A549 (cell line): ENCODE measurements at regions of chr1 and their contacts with region 1.

Region 1: DNA sequence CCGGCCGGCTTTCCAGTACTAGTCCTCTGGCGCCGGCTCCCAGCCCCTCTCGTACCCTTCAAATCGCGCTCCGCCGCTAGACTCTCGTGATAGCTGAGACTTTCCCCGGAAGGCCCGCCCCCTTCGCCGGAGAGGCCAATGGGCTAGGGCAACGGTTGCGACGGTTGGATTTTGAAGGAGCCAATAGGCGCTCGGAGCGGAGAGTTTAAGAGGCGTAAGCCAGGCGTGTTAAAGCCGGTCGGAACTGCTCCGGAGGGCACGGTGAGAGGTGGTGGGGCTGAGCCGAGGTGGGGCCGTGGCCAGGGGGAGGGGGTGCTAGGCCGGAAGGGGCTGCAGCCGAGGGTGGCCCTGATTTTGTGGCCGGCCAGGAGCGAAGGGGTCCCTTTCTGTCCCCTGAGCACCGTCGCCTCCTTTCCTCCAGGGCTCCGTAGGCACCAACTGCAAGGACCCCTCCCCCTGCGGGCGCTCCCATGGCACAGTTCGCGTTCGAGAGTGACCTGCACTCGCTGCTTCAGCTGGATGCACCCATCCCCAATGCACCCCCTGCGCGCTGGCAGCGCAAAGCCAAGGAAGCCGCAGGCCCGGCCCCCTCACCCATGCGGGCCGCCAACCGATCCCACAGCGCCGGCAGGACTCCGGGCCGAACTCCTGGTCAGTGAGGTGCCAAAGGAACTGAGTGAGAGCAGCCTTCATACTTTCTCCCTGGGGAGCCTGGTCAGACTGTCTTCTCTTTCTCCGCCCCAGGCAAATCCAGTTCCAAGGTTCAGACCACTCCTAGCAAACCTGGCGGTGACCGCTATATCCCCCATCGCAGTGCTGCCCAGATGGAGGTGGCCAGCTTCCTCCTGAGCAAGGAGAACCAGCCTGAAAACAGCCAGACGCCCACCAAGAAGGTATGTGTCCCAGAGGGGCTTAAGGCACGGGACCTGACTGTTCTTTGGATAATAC is at the start of gene CDC20:
- DNase-seq: peak; percentile 68 to 95
- ATAC-seq: peak; percentile 91 to 96
- H3K4me3 ChIP-seq: peak within 1 kb of the TSS; percentile 62
- H3K27ac ChIP-seq: peak within 1 kb of the TSS; percentile 92 to 97
- H3K4me1 ChIP-seq: peaks cover 41% of the 10 kb centered on the region
- CTCF ChIP-seq: no peak
- EP300 ChIP-seq: no peak
- POLR2A ChIP-seq: peak; percentile 42; the same call in 1 of the 2 replicates
- RAD21 ChIP-seq: no peak
- polyA plus RNA-seq, gene CDC20: 73.8 and 91.5 TPM in 2 replicates

Region 2: GRCh38 chr1:43206600-43207228 is 152.3 kb before region 1 on chr1:
- CTCF ChIA-PET with region 1: no interaction called
- POLR2A ChIA-PET with region 1: interaction called, 10 read pairs
- DNase-seq: peak; percentile 66 to 95
- ATAC-seq: peak; percentile 96 to 99
- H3K4me3 ChIP-seq: peak overlapping the region; percentile 32
- H3K27ac ChIP-seq: peak overlapping the region; percentile 89 to 92
- H3K4me1 ChIP-seq: peaks cover 26% of the 10 kb centered on the region
- CTCF ChIP-seq: no peak
- EP300 ChIP-seq: peak; percentile 31 to 69; a peak in 2 of 5 replicates
- POLR2A ChIP-seq: peak; percentile 7; the same call in 1 of the 2 replicates
- RAD21 ChIP-seq: 0 out of 5 replicates have a peak, but pooled peaks of 1 of the 2 experiments have one; percentile 6

Region 3: GRCh38 chr1:43300378-43301094 is 58.5 kb before region 1 on chr1 and contains the start of gene TIE1:
- CTCF ChIA-PET with region 1: no interaction called
- POLR2A ChIA-PET with region 1: no interaction called
- DNase-seq: no peak
- ATAC-seq: no peak
- H3K4me3 ChIP-seq: no peak within 1 kb of the TSS
- H3K27ac ChIP-seq: no peak within 1 kb of the TSS
- H3K4me1 ChIP-seq: no peaks in the 10 kb centered on the region
- CTCF ChIP-seq: no peak
- EP300 ChIP-seq: no peak
- POLR2A ChIP-seq: no peak
- RAD21 ChIP-seq: no peak
- polyA plus RNA-seq, gene TIE1: not detected in 2 replicates

Region 4: DNA sequence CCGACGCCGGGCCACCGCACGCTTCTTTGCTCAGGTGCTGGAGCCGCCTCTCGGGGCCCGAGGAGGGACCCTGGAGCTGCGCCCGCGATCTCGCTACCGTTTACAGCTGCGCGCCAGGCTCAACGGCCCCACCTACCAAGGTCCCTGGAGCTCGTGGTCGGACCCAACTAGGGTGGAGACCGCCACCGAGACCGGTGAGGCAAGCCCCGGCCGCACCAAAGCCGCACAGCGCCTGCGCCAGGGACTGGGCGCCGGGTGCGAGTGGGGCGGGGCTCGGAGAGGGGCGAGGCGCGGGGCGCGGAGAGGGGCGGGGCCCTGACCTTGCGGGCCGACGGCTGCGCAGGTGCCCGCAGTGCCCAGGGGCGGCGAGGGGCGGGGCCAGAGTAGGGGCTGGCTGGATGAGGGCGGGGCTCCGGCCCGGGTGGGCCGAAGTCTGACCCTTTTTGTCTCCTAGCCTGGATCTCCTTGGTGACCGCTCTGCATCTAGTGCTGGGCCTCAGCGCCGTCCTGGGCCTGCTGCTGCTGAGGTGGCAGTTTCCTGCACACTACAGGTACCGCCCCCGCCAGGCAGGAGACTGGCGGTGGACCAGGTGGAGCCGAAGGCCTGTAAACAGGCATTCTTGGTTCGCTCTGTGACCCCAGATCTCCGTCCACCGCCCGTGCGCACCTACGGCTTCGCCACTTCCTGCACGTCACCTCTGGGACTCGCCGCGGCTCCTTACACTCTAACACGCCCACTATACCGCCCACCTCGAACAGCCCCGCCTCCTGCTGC is 10.0 kb before region 1 on chr1:
- CTCF ChIA-PET with region 1: no interaction called
- POLR2A ChIA-PET with region 1: interaction called, 18 read pairs
- DNase-seq: peak; percentile 79 to 89
- ATAC-seq: peak; percentile 93
- H3K4me3 ChIP-seq: peak overlapping the region; percentile 70
- H3K27ac ChIP-seq: peak overlapping the region; percentile 96 to 99
- H3K4me1 ChIP-seq: peaks cover 9% of the 10 kb centered on the region; the same call in 2 of the 3 replicates
- CTCF ChIP-seq: no peak
- EP300 ChIP-seq: no peak
- POLR2A ChIP-seq: peak; percentile 70
- RAD21 ChIP-seq: no peak

Region 5: GRCh38 chr1:43389326-43390313 is 30.6 kb after region 1 on chr1 and contains the starts of genes MED8 and SZT2:
- CTCF ChIA-PET with region 1: interaction called, 3 read pairs
- POLR2A ChIA-PET with region 1: interaction called, 11 read pairs
- DNase-seq: peak; percentile 88 to 91
- ATAC-seq: peak; percentile 99
- H3K4me3 ChIP-seq: peak within 1 kb of the TSS; percentile 74
- H3K27ac ChIP-seq: peak within 1 kb of the TSS; percentile 89 to 95
- H3K4me1 ChIP-seq: peaks cover 22% of the 10 kb centered on the region; the same call in 2 of the 3 replicates
- CTCF ChIP-seq: no peak
- EP300 ChIP-seq: no peak
- POLR2A ChIP-seq: peak; percentile 77
- RAD21 ChIP-seq: no peak
- polyA plus RNA-seq, gene MED8: 33.9 and 40.4 TPM in 2 replicates
- polyA plus RNA-seq, gene SZT2: 6.5 and 10.4 TPM in 2 replicates

Region 6: DNA sequence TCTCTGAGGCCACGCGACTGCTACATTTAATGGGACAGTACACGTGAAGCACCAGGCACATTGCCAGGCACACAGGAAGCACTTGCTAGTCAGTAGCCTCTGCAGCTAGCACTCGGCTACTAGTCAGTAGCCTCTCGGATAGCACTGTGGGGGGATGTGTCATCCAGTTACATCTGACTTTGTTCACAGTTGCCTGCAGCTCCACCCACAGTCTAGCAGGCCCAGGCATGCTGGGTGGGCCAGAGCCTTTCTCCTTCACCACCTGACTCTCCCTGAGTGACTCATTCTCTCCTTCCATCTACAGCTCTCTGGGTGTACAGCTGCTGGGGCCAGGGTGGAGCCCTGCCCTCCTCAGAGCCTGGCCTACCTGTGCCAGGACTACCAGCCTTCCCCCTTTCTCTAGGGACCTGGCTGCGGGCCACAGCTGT is 223.2 kb after region 1 on chr1:
- CTCF ChIA-PET with region 1: no interaction called
- POLR2A ChIA-PET with region 1: no interaction called
- DNase-seq: peak; percentile 66 to 73
- ATAC-seq: peak; percentile 92 to 95
- H3K4me3 ChIP-seq: no peak overlapping the region
- H3K27ac ChIP-seq: peak overlapping the region; percentile 74 to 89
- H3K4me1 ChIP-seq: peaks cover 21% of the 10 kb centered on the region
- CTCF ChIP-seq: no peak
- EP300 ChIP-seq: no peak
- POLR2A ChIP-seq: no peak
- RAD21 ChIP-seq: 0 out of 5 replicates have a peak, but pooled peaks of 1 of the 2 experiments have one; percentile 12

Region 7: GRCh38 chr1:43660355-43660754 is 301.3 kb after region 1 on chr1:
- CTCF ChIA-PET with region 1: no interaction called
- POLR2A ChIA-PET with region 1: no interaction called
- DNase-seq: no peak
- ATAC-seq: no peak
- H3K4me3 ChIP-seq: no peak overlapping the region
- H3K27ac ChIP-seq: no peak overlapping the region
- H3K4me1 ChIP-seq: no peaks in the 10 kb centered on the region
- CTCF ChIP-seq: no peak
- EP300 ChIP-seq: no peak
- POLR2A ChIP-seq: no peak
- RAD21 ChIP-seq: no peak